CD8-positive, alpha-beta memory T cell (primary cell): ENCODE measurements at regions of chr2 and their contacts with region 1.

Region 1: DNA sequence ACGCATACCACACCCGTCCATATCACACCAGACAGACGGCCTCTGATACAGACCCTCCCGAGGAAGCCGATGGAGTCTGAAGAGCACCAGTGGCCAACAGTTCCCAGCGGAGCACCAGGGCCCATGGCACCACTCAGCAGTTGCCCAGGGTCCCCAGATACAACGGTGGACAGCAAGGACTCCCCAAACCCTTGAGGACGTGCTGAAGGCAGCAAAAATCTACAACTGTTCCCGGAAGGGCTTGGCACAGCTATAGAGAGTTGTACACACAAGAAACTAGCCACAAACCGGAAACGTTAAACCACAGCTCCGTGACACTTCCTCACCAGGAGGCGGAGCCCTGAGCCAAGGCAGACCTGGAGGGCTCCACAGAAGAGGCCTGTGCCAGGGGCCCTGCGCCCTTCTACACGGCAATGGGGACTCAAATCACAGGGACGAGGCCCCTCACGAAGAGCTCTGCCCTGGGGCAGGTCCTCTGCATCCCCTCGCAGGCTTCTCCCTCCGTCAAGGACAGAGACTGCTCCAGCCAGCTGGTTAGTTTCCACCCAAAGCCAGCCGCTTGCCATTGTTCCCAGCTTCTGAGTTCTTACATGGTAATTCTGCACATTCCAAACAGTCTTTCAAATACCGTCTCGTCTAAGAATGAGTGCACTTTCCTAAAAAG is 133.4 kb downstream of the HDAC4 start:
- DNase-seq: peak; percentile 85 to 96 (median 92)
- H3K4me3 ChIP-seq: peak overlapping the region; percentile 100
- H3K4me3 Mint-ChIP-seq: peak overlapping the region; percentile 93 to 99 (median 98)
- H3K27ac ChIP-seq: peak overlapping the region; percentile 93
- H3K27ac Mint-ChIP-seq: peak overlapping the region; percentile 94 to 99 (median 99)
- H3K4me1 ChIP-seq: peaks cover 72% of the 10 kb centered on the region
- H3K4me1 Mint-ChIP-seq: peaks cover 72 to 90% (median 76%) of the 10 kb centered on the region in 3 donors
- H3K27me3 ChIP-seq: no peaks in the 10 kb centered on the region
- H3K27me3 Mint-ChIP-seq: peaks cover 0 to 3% of the 10 kb centered on the region in 2 donors

Region 2: GRCh38 chr2:238596571-238597551 is 670.6 kb before region 1 on chr2:
- CTCF ChIA-PET with region 1: no interaction called
- POLR2A ChIA-PET with region 1: no interaction called
- DNase-seq: no peak
- H3K4me3 ChIP-seq: no peak overlapping the region
- H3K4me3 Mint-ChIP-seq: no peak overlapping the region
- H3K27ac ChIP-seq: no peak overlapping the region
- H3K27ac Mint-ChIP-seq: peak overlapping the region in 2 of 8 donors; percentile 1 to 79
- H3K4me1 ChIP-seq: no peaks in the 10 kb centered on the region
- H3K4me1 Mint-ChIP-seq: no peaks in the 10 kb centered on the region
- H3K27me3 ChIP-seq: no peaks in the 10 kb centered on the region
- H3K27me3 Mint-ChIP-seq: peaks cover 12 to 27% of the 10 kb centered on the region in 2 donors

Region 3: DNA sequence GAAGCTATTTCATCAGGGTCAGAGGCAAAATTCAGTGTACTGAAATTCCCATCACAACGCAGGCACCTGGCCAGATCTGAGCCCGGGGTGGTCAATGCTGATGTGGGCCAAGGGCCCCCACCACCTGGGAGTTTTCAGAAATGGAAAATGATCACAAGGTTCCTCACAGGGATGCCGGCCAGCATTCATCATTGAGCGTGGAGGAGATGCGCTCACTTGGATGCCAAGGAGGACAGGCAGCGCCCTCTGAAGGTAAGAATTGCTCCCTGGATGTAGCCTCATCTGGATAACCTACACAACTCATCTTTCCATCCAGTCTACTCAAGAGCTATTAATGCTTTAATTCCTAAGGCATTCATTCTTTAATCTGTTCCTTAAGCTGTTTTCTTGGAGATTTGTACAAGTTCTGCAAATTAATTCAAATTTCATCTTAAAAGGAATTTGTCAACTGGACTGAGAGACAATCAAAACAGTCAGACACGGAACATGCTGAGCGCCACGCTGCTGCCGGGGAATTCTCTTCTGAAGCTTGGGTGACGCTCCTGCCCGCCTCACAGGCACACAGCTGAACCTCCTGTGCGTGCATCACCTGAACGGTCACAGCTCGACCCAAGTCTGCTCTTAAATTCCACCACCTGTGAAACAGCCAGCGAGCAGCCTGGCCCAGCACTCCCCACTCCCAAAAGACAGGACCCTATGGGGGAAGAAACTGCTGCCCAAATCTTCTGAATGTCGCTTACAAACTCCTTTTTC is 73.3 kb before region 1 on chr2:
- CTCF ChIA-PET with region 1: no interaction called
- POLR2A ChIA-PET with region 1: no interaction called
- DNase-seq: no peak
- H3K4me3 ChIP-seq: no peak overlapping the region
- H3K4me3 Mint-ChIP-seq: peak overlapping the region in 1 of 7 donors; percentile 48
- H3K27ac ChIP-seq: no peak overlapping the region
- H3K27ac Mint-ChIP-seq: no peak overlapping the region
- H3K4me1 ChIP-seq: no peaks in the 10 kb centered on the region
- H3K4me1 Mint-ChIP-seq: peaks cover 11 to 18% (median 13%) of the 10 kb centered on the region in 3 donors
- H3K27me3 ChIP-seq: no peaks in the 10 kb centered on the region
- H3K27me3 Mint-ChIP-seq: no peaks in the 10 kb centered on the region

Region 4: DNA sequence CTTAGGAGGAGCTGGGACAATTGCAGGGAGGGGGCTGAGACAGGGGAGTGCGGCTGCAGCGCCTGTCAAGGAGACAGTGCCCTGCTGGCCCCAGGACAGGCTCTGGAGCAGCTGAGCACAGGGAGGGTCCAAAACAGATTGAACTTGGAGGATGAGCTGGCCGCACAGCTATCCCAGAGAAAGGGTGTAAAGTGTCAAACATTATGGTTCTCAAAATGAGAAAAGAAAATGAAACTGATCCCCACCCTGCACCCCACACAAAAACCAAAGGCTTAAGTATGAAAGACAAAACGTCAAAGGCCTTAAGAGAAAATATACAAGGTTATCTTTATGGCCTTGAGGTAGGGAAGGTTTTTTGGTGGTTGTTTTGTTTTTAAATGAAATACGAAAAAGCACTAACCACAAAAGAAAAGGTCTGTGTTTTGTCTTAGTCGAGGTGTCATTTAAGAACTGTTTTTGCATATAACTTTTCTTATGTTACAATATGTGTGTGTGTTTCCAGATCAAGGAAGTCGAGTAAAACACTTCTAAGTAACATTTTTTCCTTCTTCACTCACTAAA is 21.6 kb after region 1 on chr2:
- CTCF ChIA-PET with region 1: interaction called, 27 read pairs
- POLR2A ChIA-PET with region 1: interaction called, 5 read pairs
- DNase-seq: peak in 3 of 5 donors; percentile 59 to 84 (median 66)
- H3K4me3 ChIP-seq: peak overlapping the region; percentile 55
- H3K4me3 Mint-ChIP-seq: peak overlapping the region; percentile 68 to 91 (median 87)
- H3K27ac ChIP-seq: peak overlapping the region; percentile 41
- H3K27ac Mint-ChIP-seq: peak overlapping the region; percentile 89 to 98 (median 96)
- H3K4me1 ChIP-seq: peaks cover 81% of the 10 kb centered on the region
- H3K4me1 Mint-ChIP-seq: peaks cover 60 to 80% (median 74%) of the 10 kb centered on the region in 3 donors
- H3K27me3 ChIP-seq: no peaks in the 10 kb centered on the region
- H3K27me3 Mint-ChIP-seq: no peaks in the 10 kb centered on the region

Region 5: DNA sequence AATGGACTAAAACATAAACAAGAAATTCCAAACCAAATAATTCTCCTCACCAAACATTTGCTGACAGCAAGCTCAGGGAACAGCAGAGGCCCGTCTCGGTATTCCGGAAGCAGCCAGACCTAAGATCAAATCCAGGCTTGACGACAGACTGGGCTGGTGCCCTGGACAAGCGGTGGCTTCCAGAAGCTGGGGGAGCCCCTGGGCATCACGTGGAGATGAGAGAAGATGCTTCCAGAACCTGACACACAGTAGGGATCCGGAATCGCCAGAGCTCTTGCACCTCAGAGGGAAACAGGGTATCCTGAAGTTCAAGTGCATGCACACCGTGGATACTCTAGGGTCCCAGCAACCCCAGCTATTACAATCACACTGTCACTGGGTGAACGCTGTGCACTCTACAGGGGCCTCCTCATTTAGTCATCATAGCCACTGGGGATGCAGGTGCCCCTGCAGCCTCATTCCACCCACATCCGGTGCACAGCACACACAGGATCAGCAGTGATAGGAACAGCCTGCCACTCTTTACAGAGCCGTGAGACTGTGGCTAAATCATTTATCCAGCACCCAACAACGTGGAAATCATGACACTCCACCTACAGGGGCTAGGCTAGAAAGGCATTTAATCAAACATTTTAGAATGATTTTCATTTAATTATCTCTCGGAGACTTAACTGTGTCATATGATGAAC is 30.8 kb after region 1 on chr2:
- CTCF ChIA-PET with region 1: interaction called, 27 read pairs
- POLR2A ChIA-PET with region 1: interaction called, 6 read pairs
- DNase-seq: peak; percentile 66 to 91 (median 82)
- H3K4me3 ChIP-seq: peak overlapping the region; percentile 86
- H3K4me3 Mint-ChIP-seq: peak overlapping the region; percentile 73 to 92 (median 88)
- H3K27ac ChIP-seq: peak overlapping the region; percentile 48
- H3K27ac Mint-ChIP-seq: peak overlapping the region; percentile 83 to 98 (median 96)
- H3K4me1 ChIP-seq: peaks cover 59% of the 10 kb centered on the region
- H3K4me1 Mint-ChIP-seq: peaks cover 50 to 72% (median 55%) of the 10 kb centered on the region in 3 donors
- H3K27me3 ChIP-seq: no peaks in the 10 kb centered on the region
- H3K27me3 Mint-ChIP-seq: peaks cover 0 to 1% of the 10 kb centered on the region in 2 donors

Region 6: DNA sequence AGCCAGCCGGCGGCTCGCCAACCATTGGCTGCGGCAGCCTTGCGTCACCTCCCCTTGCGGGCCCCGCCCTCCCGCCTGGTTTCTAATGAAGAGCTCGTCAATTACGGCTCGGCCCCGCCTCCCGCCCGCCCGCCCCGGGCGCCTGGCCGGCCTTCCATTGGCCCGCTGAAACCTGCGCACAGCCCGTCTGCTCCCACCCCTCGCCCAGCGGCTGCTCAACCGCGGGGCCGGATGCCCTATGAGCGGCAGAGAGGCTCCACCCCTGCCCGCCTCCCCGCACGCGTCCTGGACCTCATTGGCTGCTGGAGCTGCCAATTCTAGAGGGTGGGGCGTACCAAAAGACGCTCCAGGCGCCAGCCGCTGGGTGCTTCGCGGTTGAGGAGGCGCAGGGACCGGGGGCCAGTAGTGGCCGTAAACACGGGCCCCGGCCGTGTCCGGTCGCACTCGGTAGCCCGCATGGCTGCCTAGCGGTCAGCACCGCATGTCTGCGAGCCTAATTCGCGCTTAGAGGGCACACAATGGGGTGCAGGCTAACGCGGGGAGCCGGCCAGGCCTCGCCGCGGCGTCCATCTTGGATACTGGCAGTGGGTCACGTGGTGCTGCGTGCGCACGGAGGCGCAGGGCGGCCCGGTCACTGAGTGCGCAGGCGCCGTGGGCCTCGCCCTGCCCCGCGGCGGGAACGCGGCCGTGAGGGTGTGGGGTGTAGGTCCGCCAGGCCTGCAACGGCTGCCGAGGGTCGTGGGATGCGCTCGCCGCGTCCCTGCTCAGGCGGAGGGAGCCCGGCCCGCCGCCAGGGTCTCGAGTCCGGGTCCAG is 133.9 kb after region 1 on chr2:
- CTCF ChIA-PET with region 1: interaction called, 9 read pairs
- POLR2A ChIA-PET with region 1: interaction called, 19 read pairs
- DNase-seq: peak; percentile 99 to 100 (median 99)
- H3K4me3 ChIP-seq: peak overlapping the region; percentile 93
- H3K4me3 Mint-ChIP-seq: peak overlapping the region; percentile 86 to 100 (median 92)
- H3K27ac ChIP-seq: peak overlapping the region; percentile 97
- H3K27ac Mint-ChIP-seq: peak overlapping the region; percentile 97 to 100 (median 98)
- H3K4me1 ChIP-seq: peaks cover 34% of the 10 kb centered on the region
- H3K4me1 Mint-ChIP-seq: peaks cover 24 to 44% (median 37%) of the 10 kb centered on the region in 3 donors
- H3K27me3 ChIP-seq: no peaks in the 10 kb centered on the region
- H3K27me3 Mint-ChIP-seq: no peaks in the 10 kb centered on the region

Region 7: GRCh38 chr2:239775623-239776435 is 508.4 kb after region 1 on chr2:
- CTCF ChIA-PET with region 1: no interaction called
- POLR2A ChIA-PET with region 1: no interaction called
- DNase-seq: peak in 1 of 5 donors; percentile 13
- H3K4me3 ChIP-seq: no peak overlapping the region
- H3K4me3 Mint-ChIP-seq: no peak overlapping the region
- H3K27ac ChIP-seq: no peak overlapping the region
- H3K27ac Mint-ChIP-seq: no peak overlapping the region
- H3K4me1 ChIP-seq: no peaks in the 10 kb centered on the region
- H3K4me1 Mint-ChIP-seq: no peaks in the 10 kb centered on the region
- H3K27me3 ChIP-seq: no peaks in the 10 kb centered on the region
- H3K27me3 Mint-ChIP-seq: peaks cover 17 to 22% of the 10 kb centered on the region in 2 donors